ENCODE measurements at regions of chr16 and their contacts with region 1.

Region 1: GRCh38 chr16:85724126-85724879 is 26.6 kb downstream of the C16orf74 start:
- H3K4me3 ChIP-seq: no peak overlapping the region
- H3K27ac ChIP-seq: no peak overlapping the region
- H3K4me1 ChIP-seq: no peaks in the 10 kb centered on the region
- CTCF ChIP-seq: no peak

Region 2: GRCh38 chr16:85569615-85570212 is 154.6 kb before region 1 on chr16:
- CTCF ChIA-PET with region 1: no interaction called
- POLR2A ChIA-PET with region 1: no interaction called
- H3K4me3 ChIP-seq: no peak overlapping the region
- H3K27ac ChIP-seq: peak overlapping the region; percentile 42; the same call in 1 of the 2 replicates
- H3K4me1 ChIP-seq: peaks cover 8% of the 10 kb centered on the region
- CTCF ChIP-seq: no peak

Region 3: DNA sequence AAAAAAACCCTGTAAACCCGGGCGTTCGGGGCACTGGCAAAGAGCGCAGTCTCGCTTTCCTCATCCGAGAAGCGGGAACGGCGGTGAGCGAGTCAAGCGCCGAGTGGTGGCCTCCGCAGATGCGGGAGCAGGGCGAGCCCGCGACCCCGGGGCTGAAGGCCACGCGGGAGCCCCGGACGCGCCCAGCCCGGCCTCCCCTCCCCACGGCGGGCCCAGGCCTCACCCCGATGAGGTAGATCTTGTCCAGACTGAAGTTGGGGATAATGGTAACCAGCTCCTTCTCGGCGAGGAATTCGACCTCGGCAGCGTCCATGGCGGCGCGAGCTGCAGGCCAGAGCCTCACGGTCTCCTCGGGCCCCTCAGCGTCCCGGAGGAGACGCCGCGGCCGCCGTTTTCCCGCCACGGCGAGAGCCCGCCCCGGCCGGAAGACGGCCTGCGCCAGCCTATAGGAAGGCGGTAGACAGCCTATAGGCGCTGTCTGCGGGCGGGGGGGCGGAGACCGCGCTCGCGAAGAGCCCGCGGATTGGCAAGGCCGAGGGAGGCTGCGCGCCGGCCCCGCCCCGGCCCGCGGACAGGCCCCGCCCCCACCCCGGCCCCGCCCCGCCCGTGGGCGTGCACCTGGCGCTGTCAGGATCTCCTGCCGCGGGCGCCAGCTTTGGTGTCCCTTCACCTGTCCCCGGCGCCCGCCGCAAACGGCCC is 35.6 kb before region 1 on chr16 and contains the start of gene GINS2:
- CTCF ChIA-PET with region 1: interaction called, 11 read pairs
- POLR2A ChIA-PET with region 1: no interaction called
- H3K4me3 ChIP-seq: peak within 1 kb of the TSS; percentile 67
- H3K27ac ChIP-seq: peak within 1 kb of the TSS; percentile 87
- H3K4me1 ChIP-seq: no peaks in the 10 kb centered on the region; the same call in 1 of the 2 replicates
- CTCF ChIP-seq: 0 out of 2 replicates have a peak, but pooled peaks have one; percentile 12

Region 4: DNA sequence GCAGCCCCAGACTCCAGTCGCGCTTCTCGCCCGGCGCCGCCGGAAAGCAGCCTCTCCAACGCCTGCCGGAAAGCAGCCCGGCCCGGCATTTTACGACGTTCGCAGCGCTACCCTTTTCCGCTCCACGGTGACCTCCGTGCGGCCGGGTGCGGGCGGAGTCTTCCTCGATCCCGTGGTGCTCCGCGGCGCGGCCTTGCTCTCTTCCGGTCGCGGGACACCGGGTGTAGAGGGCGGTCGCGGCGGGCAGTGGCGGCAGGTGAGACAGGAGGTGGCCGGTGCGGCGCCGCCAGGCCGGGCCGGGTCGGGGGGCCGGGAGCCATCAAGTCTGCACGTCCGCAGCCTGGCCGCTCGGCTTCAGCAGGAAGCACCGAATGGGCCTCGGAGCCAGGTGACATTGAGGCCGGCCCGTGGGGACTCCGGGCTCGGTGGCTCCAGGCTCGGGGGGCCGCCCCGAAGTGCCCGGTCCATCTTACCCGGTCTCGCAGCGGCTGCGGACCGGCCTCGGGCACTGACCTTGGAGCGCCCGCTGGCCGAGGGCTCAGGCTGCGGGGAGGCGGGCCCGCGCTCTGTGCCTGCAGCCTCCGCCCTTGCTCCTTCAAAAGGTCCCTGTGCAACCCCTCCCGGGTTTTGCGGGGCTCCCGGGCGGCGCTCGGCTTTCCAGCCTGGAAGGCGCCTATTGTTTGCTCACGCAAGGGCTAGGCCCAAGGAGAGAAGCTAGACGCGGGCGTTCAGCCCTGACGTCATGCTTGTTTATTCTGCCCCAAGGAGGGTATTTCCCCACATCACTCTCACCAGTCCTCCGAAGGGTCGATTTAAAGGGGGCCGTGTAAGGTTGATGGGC is 75.4 kb after region 1 on chr16 and contains the starts of genes COX4I1 and EMC8:
- CTCF ChIA-PET with region 1: no interaction called
- POLR2A ChIA-PET with region 1: no interaction called
- H3K4me3 ChIP-seq: peak within 1 kb of the TSS; percentile 91
- H3K27ac ChIP-seq: peak within 1 kb of the TSS; percentile 89
- H3K4me1 ChIP-seq: peaks cover 3% of the 10 kb centered on the region
- CTCF ChIP-seq: peak; percentile 15; the same call in 1 of the 2 replicates

Measured in HEK293 (cell line).